Left ventricle myocardium superior (tissue), 1 donor: ENCODE measurements at regions of chr20 and their contacts with region 1.

Region 1: DNA sequence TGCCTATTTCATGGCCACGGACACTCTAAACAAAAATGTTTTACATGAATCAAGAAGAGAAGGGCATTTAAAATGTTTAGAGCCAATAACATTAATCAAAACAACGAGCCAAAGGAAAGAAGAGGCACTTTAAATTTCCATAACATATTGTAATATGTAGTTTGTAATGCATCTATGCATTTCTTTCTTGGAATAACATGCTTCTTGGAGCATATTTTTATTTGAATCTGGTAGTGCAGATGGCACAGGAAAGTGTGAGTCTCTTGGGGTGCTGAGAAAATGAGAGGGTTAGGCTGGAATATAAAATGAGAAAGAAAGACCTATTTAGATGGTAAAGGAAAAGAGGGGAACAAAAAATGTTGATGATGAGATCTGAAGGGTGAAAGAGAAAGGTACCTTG is 305.4 kb downstream of the BTBD3 start:
- DNase-seq: no peak
- ATAC-seq: no peak

Region 2: GRCh38 chr20:11880680-11881079 is 342.4 kb before region 1 on chr20:
- intact Hi-C with region 1: no loop called
- DNase-seq: peak; percentile 18
- ATAC-seq: no peak

Region 3: GRCh38 chr20:12896180-12896579 is 673.1 kb after region 1 on chr20:
- intact Hi-C with region 1: loop called (anchors 2 kb)
- DNase-seq: no peak
- ATAC-seq: no peak